Mammary epithelial cell (primary cell): ENCODE measurements at regions of chr1 and their contacts with region 1.

Region 1: GRCh38 chr1:185490924-185491323 is 173.9 kb upstream of the IVNS1ABP start:
- DNase-seq: no peak
- H3K4me3 ChIP-seq: no peak overlapping the region
- H3K27ac ChIP-seq: no peak overlapping the region
- H3K4me1 ChIP-seq: peaks cover 9% of the 10 kb centered on the region
- H3K27me3 ChIP-seq: no peaks in the 10 kb centered on the region
- CTCF ChIP-seq: no peak

Region 2: GRCh38 chr1:185017326-185017725 is 473.6 kb before region 1 on chr1:
- CTCF ChIA-PET with region 1: interaction called, 13 read pairs
- dilution Hi-C with region 1: no loop called
- in situ Hi-C with region 1: no loop called
- intact Hi-C with region 1: no loop called
- DNase-seq: peak; percentile 90
- H3K4me3 ChIP-seq: no peak overlapping the region
- H3K27ac ChIP-seq: peak overlapping the region; percentile 35
- H3K4me1 ChIP-seq: peaks cover 16% of the 10 kb centered on the region
- H3K27me3 ChIP-seq: no peaks in the 10 kb centered on the region
- CTCF ChIP-seq: no peak